A549 (cell line): ENCODE measurements at regions of chr17 and their contacts with region 1.

Region 1: DNA sequence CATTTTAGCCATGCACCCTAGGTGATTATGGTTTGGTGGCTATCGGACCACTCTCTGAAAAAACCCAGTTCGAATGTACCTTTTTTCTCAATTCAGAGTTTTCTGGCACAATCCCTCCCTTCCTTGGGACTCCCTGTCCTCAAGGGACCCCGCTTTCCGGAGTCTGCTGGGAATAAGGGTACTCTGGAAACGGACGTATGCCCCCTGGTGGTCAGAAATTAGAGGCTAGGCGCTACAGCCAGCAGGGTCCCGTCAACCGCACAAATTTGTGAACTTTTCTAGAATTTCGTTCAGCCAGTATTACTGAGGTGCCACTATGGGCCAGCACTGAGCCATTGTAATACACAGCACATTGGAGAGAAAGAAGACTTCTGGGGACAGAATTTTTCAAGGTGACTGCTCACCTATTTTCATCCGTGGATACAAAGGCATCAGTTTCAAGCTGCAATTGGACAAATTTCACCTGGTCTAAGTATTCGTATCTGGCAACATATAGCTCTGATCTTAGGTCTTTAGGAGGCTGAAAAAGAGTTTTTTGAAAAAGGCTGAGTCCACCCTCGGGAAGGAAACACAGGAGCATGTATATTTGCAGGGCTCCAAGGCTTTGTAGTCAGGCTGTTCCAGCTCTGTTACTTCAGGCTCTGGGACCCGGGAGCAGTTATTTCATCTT is 27.1 kb upstream of the CRYBA1 start:
- DNase-seq: peak; percentile 86 to 97
- ATAC-seq: peak; percentile 97 to 99
- H3K4me3 ChIP-seq: no peak overlapping the region
- H3K27ac ChIP-seq: peak overlapping the region; percentile 5 to 67; a peak in 3 of 6 replicates
- H3K4me1 ChIP-seq: 0 out of 3 replicates have a peak, but pooled peaks cover 6% of the 10 kb centered on the region
- CTCF ChIP-seq: peak; percentile 99
- EP300 ChIP-seq: no peak
- POLR2A ChIP-seq: no peak
- RAD21 ChIP-seq: peak; percentile 87 to 94

Region 2: GRCh38 chr17:28967221-28968140 is 252.0 kb before region 1 on chr17:
- CTCF ChIA-PET with region 1: interaction called, 11 read pairs
- POLR2A ChIA-PET with region 1: no interaction called
- DNase-seq: no peak
- ATAC-seq: no peak
- H3K4me3 ChIP-seq: no peak overlapping the region
- H3K27ac ChIP-seq: no peak overlapping the region
- H3K4me1 ChIP-seq: 0 out of 3 replicates have a peak, but pooled peaks cover 6% of the 10 kb centered on the region
- CTCF ChIP-seq: no peak
- EP300 ChIP-seq: no peak
- POLR2A ChIP-seq: no peak
- RAD21 ChIP-seq: no peak

Region 3: DNA sequence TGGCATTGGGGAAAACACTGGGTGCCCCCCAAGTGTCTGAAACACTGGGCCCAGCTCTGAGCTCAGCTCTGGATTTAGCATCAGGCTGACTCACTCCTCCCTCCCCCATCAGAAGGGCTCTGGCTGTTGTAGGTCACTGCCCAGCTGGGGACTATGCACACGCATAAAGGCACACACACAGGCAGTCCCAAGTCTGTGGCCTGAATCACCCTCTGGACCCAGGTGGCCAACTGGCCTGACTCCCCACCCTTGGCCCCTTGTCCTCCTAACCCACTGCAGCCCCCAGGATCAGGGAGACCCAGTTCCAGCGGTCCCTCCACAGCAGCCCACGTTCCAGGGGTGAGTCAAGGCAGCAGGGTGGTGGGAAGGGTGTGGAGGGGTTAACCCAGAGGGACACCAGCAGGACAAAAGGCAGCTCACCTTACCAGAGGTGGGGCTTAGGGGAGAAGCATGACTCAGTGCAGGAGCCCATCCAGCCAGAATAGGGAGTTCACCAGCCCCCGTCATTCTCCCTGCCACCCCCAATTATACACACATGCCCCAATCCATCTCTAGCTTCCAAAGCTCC is 86.3 kb before region 1 on chr17:
- CTCF ChIA-PET with region 1: interaction called, 482 read pairs
- POLR2A ChIA-PET with region 1: no interaction called
- DNase-seq: peak; percentile 50 to 62
- ATAC-seq: peak; percentile 74 to 87
- H3K4me3 ChIP-seq: no peak overlapping the region
- H3K27ac ChIP-seq: peak overlapping the region; percentile 36 to 81; a peak in 5 of 6 replicates
- H3K4me1 ChIP-seq: peaks cover 41% of the 10 kb centered on the region
- CTCF ChIP-seq: no peak
- EP300 ChIP-seq: no peak
- POLR2A ChIP-seq: no peak
- RAD21 ChIP-seq: no peak

Region 4: DNA sequence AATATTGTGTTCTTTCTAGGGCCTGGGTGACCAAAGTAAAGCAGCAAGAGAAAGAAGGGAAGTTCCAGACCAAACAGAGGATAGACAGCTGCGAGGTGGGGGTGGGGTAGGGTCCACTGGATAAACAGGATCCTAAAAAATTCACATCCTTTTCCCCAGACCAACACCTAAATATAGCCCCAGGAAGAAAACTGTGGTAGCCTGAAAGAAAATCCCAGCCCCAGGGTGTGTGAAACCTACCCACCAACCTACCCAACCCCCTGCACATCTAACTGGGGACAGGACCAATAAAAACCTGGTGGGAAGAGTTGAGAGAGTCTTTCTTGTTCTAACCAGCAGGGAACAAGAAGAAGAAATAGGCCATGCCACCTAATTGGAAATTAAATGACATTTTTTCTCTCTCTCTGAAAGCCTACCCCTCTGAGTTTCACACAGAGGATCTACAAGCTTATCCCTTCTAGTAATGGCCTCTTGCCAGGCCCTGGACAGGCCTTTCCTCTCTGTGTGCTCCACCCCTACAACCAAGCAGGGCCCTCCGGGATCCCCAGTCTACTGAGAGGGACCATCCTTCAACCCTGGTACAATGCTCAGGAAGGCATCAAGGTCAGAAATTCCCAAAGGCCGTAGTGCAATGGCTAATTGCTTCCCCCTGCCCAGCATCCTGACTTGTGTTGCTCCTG is 51.3 kb before region 1 on chr17:
- CTCF ChIA-PET with region 1: interaction called, 15 read pairs
- POLR2A ChIA-PET with region 1: no interaction called
- DNase-seq: no peak
- ATAC-seq: no peak
- H3K4me3 ChIP-seq: no peak overlapping the region
- H3K27ac ChIP-seq: 0 out of 6 replicates have a peak overlapping the region, but pooled peaks of 1 of the 2 experiments have one; percentile 1
- H3K4me1 ChIP-seq: peaks cover 12% of the 10 kb centered on the region
- CTCF ChIP-seq: no peak
- EP300 ChIP-seq: no peak
- POLR2A ChIP-seq: no peak
- RAD21 ChIP-seq: no peak

Region 5: GRCh38 chr17:29233301-29233700 is 13.8 kb after region 1 on chr17:
- CTCF ChIA-PET with region 1: interaction called, 56 read pairs
- POLR2A ChIA-PET with region 1: no interaction called
- DNase-seq: no peak
- ATAC-seq: no peak
- H3K4me3 ChIP-seq: no peak overlapping the region
- H3K27ac ChIP-seq: no peak overlapping the region
- H3K4me1 ChIP-seq: peaks cover 11% of the 10 kb centered on the region
- CTCF ChIP-seq: no peak
- EP300 ChIP-seq: no peak
- POLR2A ChIP-seq: no peak
- RAD21 ChIP-seq: no peak

Region 6: DNA sequence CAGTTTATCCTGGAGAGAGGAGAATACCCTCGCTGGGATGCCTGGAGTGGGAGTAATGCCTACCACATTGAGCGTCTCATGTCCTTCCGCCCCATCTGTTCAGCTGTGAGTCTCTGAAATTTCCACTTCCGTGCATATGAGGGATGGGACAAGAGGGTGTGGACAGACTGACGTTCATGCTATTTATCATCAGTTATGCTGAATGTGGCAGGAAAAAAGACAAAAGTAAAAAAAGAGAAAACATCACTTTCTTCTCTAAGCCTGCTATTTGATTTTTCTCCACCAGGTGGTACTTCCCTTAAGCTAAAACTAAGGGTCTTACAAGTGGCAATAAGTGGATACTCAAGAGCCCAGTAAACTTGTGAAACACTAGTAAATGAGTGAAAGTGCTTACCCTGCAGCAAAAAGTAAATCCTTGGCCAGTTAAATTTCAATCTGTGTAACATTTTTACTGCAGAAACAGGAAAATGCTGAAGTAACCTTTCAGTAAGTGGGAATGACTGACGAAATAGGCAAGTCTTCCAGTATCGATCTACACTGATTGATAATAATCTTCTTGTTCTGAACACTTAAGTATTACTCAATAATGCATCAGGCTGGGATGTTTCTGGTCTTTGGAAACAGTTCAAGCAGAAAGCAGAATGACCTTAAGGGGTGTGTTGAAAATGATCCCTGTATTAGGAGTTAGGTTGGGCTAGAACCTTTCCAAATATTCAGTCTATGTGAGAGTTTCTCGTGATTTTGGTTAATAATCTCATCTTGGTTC is 32.8 kb after region 1 on chr17:
- CTCF ChIA-PET with region 1: interaction called, 59 read pairs
- POLR2A ChIA-PET with region 1: no interaction called
- DNase-seq: peak; percentile 59 to 63
- ATAC-seq: peak; percentile 58 to 60; a peak in 5 of 6 replicates
- H3K4me3 ChIP-seq: no peak overlapping the region
- H3K27ac ChIP-seq: no peak overlapping the region; a peak in 1 of 6 replicates
- H3K4me1 ChIP-seq: peaks cover 34% of the 10 kb centered on the region
- CTCF ChIP-seq: peak; percentile 49
- EP300 ChIP-seq: no peak
- POLR2A ChIP-seq: no peak
- RAD21 ChIP-seq: peak; percentile 15 to 46; a peak in 2 of 5 replicates

Region 7: GRCh38 chr17:29293890-29294579 is 74.5 kb after region 1 on chr17 and contains the start of gene NUFIP2:
- CTCF ChIA-PET with region 1: interaction called, 53 read pairs
- POLR2A ChIA-PET with region 1: interaction called, 7 read pairs
- DNase-seq: peak; percentile 99 to 100
- ATAC-seq: peak; percentile 83 to 97
- H3K4me3 ChIP-seq: peak within 1 kb of the TSS; percentile 72
- H3K27ac ChIP-seq: peak within 1 kb of the TSS; percentile 91 to 98
- H3K4me1 ChIP-seq: peaks cover 25% of the 10 kb centered on the region
- CTCF ChIP-seq: no peak
- EP300 ChIP-seq: no peak
- POLR2A ChIP-seq: peak; percentile 99
- RAD21 ChIP-seq: 0 out of 5 replicates have a peak, but pooled peaks have one; percentile 3 to 15
- polyA plus RNA-seq, gene NUFIP2: 29.4 and 34.7 TPM in 2 replicates